Right ventricle myocardium inferior (tissue), 1 donor: ENCODE measurements at regions of chr13 and their contacts with region 1.

Region 1: GRCh38 chr13:101514788-101515187 is 62.3 kb downstream of the ITGBL1 start:
- DNase-seq: no peak
- ATAC-seq: no peak

Region 2: GRCh38 chr13:101170306-101170705 is 344.5 kb before region 1 on chr13:
- intact Hi-C with region 1: no loop called
- DNase-seq: no peak
- ATAC-seq: no peak

Region 3: DNA sequence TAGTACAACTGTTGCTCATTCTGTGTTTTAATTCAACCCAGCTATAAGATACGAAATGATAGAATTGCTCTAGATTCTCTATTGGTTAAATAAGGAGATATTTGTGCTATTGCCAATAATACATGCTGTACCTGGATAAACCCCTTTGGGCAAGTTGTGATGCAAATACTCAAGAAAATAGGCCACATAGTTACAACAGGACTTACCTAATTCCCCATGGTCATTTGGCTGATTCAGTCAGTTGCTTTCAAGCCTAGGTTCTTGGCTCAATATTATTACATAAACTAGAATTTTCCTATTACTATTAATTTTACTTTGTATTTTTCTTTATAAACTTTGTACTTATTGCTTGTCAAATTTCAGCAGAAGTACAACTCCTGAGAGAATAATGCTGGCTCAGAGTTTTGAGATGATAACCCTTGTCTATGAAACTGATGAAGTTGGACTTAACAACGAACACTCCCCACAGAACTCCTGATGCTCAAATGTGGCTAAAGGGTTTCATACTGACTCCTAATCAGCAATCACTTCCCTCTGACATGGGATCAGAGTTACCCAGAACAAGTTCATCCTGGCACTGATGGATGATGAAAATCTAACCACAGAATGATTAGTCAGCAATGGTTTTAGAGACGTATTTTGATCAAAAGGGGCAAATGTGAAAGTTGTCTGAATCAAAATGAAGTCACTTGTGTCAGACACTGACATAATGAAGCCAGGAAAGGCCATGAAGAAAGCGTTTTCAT is 158.7 kb after region 1 on chr13:
- intact Hi-C with region 1: no loop called
- DNase-seq: no peak
- ATAC-seq: peak; percentile 54

Region 4: DNA sequence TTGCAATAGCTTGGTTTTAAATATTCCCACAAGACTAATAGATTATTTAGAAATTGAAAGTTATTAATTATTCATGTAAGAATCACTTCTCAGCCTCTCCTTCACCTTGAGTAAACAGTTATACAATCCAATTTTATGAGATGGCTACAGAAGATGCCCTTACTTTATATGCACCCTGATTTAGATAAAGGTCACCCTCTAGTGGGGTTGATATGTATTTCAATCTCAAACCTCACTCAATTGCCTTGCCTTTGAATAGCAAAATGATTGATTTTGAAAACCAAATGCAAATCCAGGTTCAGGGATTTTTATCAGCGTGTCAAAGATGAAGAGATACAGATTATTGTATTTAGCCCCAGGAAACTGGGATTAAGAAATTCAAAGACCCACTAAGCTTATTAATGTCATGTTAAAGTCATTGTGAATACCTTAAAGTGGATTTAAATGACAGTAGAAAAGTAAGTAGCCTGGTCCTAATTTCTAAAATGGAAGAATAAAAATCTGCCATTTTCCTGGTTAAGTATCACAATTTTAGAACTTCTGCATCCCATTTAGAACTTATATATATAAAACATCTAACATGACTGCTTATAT is 242.8 kb after region 1 on chr13:
- intact Hi-C with region 1: loop called (anchors 1 kb)
- DNase-seq: no peak
- ATAC-seq: no peak